Breast epithelium (tissue), 4 donors: ENCODE measurements at regions of chr3 and their contacts with region 1.

Region 1: DNA sequence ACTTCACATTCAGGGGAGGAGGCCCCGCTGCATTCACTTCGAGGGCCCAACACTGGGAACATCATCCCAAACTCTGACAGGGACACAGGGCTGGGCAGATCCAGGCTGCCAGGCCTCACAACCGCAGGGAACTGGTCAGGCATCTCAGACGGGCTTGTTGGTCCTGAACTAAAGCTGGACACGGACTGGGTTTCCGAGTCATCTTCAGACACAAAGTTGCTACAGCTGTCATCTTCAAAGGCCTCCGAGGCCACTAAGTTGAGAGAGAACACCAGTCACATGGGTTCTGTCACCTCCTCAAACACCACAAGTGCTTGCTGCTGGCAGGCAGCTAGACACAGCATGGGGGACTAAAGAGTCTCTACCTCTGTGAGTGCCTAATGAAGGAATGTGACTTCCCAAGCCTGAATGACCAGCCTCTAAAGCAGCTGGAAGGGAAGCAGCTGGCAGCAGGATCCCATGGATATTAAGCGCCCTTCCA is 50.9 kb downstream of the CAPN7 start:
- DNase-seq: no peak
- H3K4me3 ChIP-seq: no peak overlapping the region
- H3K27ac ChIP-seq: peak overlapping the region in 1 of 2 donors; percentile 56
- H3K4me1 ChIP-seq: peaks cover 0 to 3% of the 10 kb centered on the region in 2 donors
- H3K27me3 ChIP-seq: no peaks in the 10 kb centered on the region
- CTCF ChIP-seq: no peak
- POLR2A ChIP-seq: no peak

Region 2: GRCh38 chr3:15997274-15997943 is 740.5 kb after region 1 on chr3:
- intact Hi-C with region 1: loop called (anchors 5 kb)
- DNase-seq: no peak
- H3K4me3 ChIP-seq: no peak overlapping the region
- H3K27ac ChIP-seq: no peak overlapping the region
- H3K4me1 ChIP-seq: no peaks in the 10 kb centered on the region
- H3K27me3 ChIP-seq: no peaks in the 10 kb centered on the region
- CTCF ChIP-seq: no peak
- POLR2A ChIP-seq: no peak